PC-9 (cell line): ENCODE measurements at regions of chr11 and their contacts with region 1.

Region 1: GRCh38 chr11:80163011-80163410 is 722.2 kb upstream of the TENM4 start:
- DNase-seq: peak in 1 of 2 experiments; percentile 73
- H3K4me3 ChIP-seq: no peak overlapping the region
- H3K27ac ChIP-seq: no peak overlapping the region
- H3K4me1 ChIP-seq: no peaks in the 10 kb centered on the region
- H3K27me3 ChIP-seq: no peaks in the 10 kb centered on the region
- CTCF ChIP-seq: no peak

Region 2: DNA sequence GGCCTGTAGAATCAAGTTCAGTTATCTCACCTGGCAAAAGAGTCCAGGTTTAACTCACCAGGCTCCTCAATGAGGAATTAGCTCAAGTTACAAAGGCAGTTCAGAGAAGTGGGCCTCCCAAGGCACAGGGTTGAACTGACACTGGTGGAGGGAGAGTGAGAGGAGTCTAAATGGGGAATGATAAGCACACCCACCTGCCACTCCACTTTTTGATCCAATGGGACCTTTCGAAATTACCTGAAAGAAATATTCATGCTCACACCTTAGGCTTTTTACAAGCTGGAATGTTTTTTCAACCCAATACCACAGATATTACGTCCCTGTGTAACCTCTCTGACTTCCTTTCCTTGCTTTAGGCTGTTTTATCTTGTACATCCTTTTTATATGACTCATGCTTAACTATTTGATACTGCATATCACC is 79.5 kb before region 1 on chr11:
- CTCF ChIA-PET with region 1: interaction called, 3 read pairs
- POLR2A ChIA-PET with region 1: no interaction called
- intact Hi-C with region 1: loop called (anchors 5 kb)
- DNase-seq: peak; percentile 78 to 81
- H3K4me3 ChIP-seq: no peak overlapping the region
- H3K27ac ChIP-seq: no peak overlapping the region
- H3K4me1 ChIP-seq: 0 out of 2 replicates have a peak, but pooled peaks cover 7% of the 10 kb centered on the region
- H3K27me3 ChIP-seq: no peaks in the 10 kb centered on the region
- CTCF ChIP-seq: no peak

Region 3: DNA sequence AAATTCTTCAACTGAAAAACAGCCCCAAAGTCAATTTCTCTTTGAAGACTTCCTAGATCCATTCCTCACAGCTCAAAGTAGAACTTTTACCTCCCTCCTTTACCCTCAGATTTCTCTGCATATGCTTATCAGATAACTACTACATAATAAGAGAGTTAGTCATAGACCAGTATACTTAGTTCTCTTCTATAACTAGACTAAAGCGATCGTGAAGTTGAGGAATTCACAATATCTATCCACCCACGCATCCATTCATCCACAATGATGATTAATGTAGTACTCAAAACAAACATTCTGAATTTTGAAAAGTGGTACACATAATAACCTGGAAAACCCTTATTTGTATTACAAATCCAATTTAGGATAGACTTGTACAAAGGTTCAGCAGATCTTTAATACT is 78.8 kb after region 1 on chr11:
- CTCF ChIA-PET with region 1: no interaction called
- POLR2A ChIA-PET with region 1: no interaction called
- intact Hi-C with region 1: loop called (anchors 5 kb)
- DNase-seq: peak in 1 of 2 experiments; percentile 38
- H3K4me3 ChIP-seq: no peak overlapping the region
- H3K27ac ChIP-seq: no peak overlapping the region
- H3K4me1 ChIP-seq: no peaks in the 10 kb centered on the region
- H3K27me3 ChIP-seq: no peaks in the 10 kb centered on the region
- CTCF ChIP-seq: no peak

Region 4: GRCh38 chr11:80297884-80298632 is 135.0 kb after region 1 on chr11:
- CTCF ChIA-PET with region 1: no interaction called
- POLR2A ChIA-PET with region 1: interaction called, 3 read pairs
- intact Hi-C with region 1: loop called (anchors 1 kb)
- DNase-seq: peak; percentile 51 to 88
- H3K4me3 ChIP-seq: no peak overlapping the region; the same call in 1 of the 2 replicates
- H3K27ac ChIP-seq: peak overlapping the region; percentile 64
- H3K4me1 ChIP-seq: peaks cover 17% of the 10 kb centered on the region
- H3K27me3 ChIP-seq: no peaks in the 10 kb centered on the region
- CTCF ChIP-seq: no peak

Region 5: DNA sequence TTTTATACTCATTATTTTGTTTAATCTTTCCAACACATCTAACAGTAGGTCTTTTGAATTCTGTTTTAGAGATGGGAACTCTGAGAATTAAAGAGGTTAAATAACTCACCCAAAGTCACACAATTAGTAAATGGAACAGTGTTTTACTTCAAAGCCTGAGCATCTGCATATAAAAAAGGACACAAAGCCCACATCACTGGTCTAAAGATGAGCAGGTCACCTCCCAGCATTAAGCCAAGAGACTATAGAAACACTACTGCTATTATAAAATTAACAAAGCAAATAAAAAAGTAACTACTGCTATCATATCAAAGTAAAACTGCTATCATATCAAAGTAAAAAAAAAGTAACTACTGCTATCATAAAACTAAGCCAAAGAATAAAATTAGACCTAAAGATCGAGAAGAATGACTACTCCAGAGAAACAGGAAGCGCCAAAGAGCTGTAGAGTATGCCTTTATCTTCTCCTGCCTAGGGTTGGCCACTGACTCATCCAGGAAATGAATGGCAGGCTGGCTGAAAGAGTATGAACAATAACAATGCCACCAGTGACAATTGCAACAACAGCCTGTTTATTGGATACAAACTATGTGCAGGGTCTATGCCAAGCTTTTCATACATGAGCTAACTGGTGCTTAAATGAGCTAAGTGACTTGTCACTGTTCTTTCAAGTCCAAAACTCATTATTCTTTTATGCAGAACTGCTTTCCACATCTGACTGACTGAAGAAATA is 430.8 kb after region 1 on chr11:
- CTCF ChIA-PET with region 1: no interaction called
- POLR2A ChIA-PET with region 1: no interaction called
- intact Hi-C with region 1: loop called (anchors 10 kb)
- DNase-seq: peak; percentile 76 to 78
- H3K4me3 ChIP-seq: no peak overlapping the region
- H3K27ac ChIP-seq: peak overlapping the region; percentile 33
- H3K4me1 ChIP-seq: peaks cover 19% of the 10 kb centered on the region
- H3K27me3 ChIP-seq: no peaks in the 10 kb centered on the region
- CTCF ChIP-seq: no peak